GM12878 (cell line): ENCODE measurements at regions of chr16 and their contacts with region 1.

Region 1: GRCh38 chr16:88737298-88738150 is 31.2 kb downstream of the CTU2 start:
- DNase-seq: peak; percentile 13
- ATAC-seq: peak; percentile 98
- H3K4me3 ChIP-seq: no peak overlapping the region
- H3K27ac ChIP-seq: no peak overlapping the region
- H3K4me1 ChIP-seq: peaks cover 3% of the 10 kb centered on the region; the same call in 1 of the 2 replicates
- H3K27me3 ChIP-seq: no peaks in the 10 kb centered on the region
- CTCF ChIP-seq: peak; percentile 93 to 96 (median 95)
- EP300 ChIP-seq: no peak
- POLR2A ChIP-seq: no peak; the same call in 1 of the 2 replicates
- RAD21 ChIP-seq: peak; percentile 62; the same call in 1 of the 2 replicates

Region 2: GRCh38 chr16:88706288-88706964 is 31.1 kb before region 1 on chr16 and contains the starts of genes CTU2 and RNF166:
- CTCF ChIA-PET with region 1: interaction called, 13 read pairs
- POLR2A ChIA-PET with region 1: no interaction called
- RAD21 ChIA-PET with region 1: interaction called, 6 read pairs
- SMC1A ChIA-PET with region 1: interaction called, 5 read pairs
- in situ Hi-C with region 1: no loop called
- intact Hi-C with region 1: no loop called
- DNase-seq: peak; percentile 32
- ATAC-seq: peak; percentile 69
- H3K4me3 ChIP-seq: peak within 1 kb of the TSS; percentile 90
- H3K27ac ChIP-seq: peak within 1 kb of the TSS; percentile 30
- H3K4me1 ChIP-seq: peaks cover 39% of the 10 kb centered on the region
- H3K27me3 ChIP-seq: no peaks in the 10 kb centered on the region
- CTCF ChIP-seq: no peak
- EP300 ChIP-seq: no peak
- POLR2A ChIP-seq: peak; percentile 75; the same call in 1 of the 2 replicates
- RAD21 ChIP-seq: no peak
- polyA plus RNA-seq, gene CTU2: 0.32 to 4.0 TPM
- polyA plus RNA-seq, gene RNF166: 0.48 to 1.3 TPM

Region 3: GRCh38 chr16:88803264-88803987 is 65.9 kb after region 1 on chr16 and contains the start of gene CDT1:
- CTCF ChIA-PET with region 1: interaction called, 15 read pairs
- POLR2A ChIA-PET with region 1: no interaction called
- RAD21 ChIA-PET with region 1: interaction called, 3 read pairs
- SMC1A ChIA-PET with region 1: no interaction called
- in situ Hi-C with region 1: no loop called
- intact Hi-C with region 1: no loop called
- DNase-seq: no peak
- ATAC-seq: peak; percentile 52
- H3K4me3 ChIP-seq: peak within 1 kb of the TSS; percentile 88
- H3K27ac ChIP-seq: peak within 1 kb of the TSS; percentile 87
- H3K4me1 ChIP-seq: peaks cover 18% of the 10 kb centered on the region
- H3K27me3 ChIP-seq: no peaks in the 10 kb centered on the region
- CTCF ChIP-seq: no peak
- EP300 ChIP-seq: no peak
- POLR2A ChIP-seq: peak; percentile 67
- RAD21 ChIP-seq: no peak
- polyA plus RNA-seq, gene CDT1: 0.50 to 1.9 TPM

Region 4: DNA sequence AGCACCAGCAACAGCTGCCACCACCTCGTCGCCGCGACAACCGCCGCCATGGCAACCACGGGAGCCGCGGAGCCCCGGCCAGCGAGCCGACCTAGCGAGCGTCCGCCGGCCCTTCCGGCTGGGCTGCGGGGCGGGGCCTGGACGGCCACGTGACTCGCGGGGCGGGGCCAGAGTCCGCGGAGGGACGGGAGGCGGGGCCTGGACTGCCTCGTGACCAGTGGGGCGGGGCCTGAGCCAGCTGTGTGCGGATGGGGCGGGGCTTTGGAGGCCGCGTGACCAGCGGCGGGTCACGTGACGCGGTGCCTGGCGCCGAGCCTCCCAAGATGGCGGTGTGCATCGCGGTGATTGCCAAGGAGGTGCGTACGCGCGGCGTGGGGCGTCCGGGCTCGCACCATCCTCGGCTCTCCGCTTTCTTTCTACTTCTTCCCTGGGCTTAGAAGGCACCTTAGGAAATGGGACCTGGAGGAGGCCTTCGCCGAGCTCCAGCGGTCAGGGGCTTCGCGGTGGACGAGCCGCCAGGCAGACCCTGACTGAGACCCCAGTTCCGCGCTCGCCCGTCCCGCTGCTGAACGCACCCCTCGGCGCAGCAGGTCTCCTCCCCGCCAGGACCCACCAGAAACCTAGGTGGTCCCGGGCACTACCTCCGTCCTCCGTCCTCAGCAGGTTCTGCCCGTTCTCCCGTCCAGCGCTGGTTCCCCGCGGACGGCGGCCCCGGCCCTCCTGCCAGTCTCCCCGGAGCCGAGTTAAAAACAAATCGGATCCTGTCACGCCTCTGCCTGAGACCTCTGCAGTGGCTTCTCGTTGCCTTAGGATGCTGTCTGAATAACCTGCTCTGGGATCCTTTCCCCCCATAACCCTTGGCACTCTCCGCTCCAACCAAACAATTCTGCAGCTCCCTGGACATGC is 119.6 kb after region 1 on chr16 and contains the starts of genes GALNS and TRAPPC2L:
- CTCF ChIA-PET with region 1: interaction called, 12 read pairs
- POLR2A ChIA-PET with region 1: no interaction called
- RAD21 ChIA-PET with region 1: interaction called, 4 read pairs
- SMC1A ChIA-PET with region 1: interaction called, 3 read pairs
- in situ Hi-C with region 1: no loop called
- intact Hi-C with region 1: loop called (anchors 1 kb)
- DNase-seq: peak; percentile 69
- ATAC-seq: peak; percentile 90
- H3K4me3 ChIP-seq: peak within 1 kb of the TSS; percentile 88
- H3K27ac ChIP-seq: peak within 1 kb of the TSS; percentile 64
- H3K4me1 ChIP-seq: peaks cover 23% of the 10 kb centered on the region
- H3K27me3 ChIP-seq: no peaks in the 10 kb centered on the region
- CTCF ChIP-seq: no peak
- EP300 ChIP-seq: no peak
- POLR2A ChIP-seq: peak; percentile 96
- RAD21 ChIP-seq: no peak
- polyA plus RNA-seq, gene GALNS: 0.37 to 0.95 TPM
- polyA plus RNA-seq, gene TRAPPC2L: 337 to 363 TPM

Region 5: DNA sequence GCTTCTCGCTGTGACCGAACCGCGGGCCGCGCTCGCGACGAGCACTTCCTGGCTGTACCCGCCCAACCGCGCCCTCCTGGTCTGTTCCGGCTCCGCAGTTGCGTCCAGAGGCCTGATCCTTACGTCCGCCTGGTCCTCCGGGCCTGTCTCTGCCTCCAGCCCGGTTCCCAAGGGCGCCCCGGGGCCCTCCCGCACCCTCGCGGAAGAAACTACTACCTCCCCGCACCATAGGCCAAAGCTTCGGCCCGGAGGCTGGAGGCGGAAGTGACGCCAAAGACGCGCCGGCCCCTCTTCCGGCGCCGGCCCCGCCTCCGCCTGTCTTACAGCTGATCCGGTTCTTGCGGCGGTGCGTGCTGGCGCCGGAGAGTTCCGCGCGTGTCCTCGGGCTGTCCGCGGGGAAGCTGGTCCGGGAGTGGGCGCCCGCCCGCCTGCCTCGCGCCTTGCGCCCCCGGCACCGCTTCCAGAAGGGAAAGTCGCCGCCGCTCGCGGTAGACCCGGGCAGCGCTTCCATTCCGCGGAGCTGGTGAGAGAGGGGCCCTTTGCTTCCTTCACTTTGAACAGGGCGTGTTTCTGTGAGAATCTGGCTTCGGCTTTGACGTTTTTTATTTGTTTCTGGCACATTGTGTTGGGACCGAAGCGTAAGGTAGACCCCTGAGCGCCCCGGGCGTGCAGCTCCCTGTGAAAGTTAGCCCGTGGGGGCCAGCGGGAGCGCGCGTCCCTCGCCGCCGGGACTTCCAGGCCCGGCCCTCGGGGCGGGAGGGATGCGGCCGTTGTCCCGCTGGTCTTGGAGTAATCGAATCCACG is 480.1 kb after region 1 on chr16 and contains the start of gene ZNF778:
- CTCF ChIA-PET with region 1: interaction called, 11 read pairs
- POLR2A ChIA-PET with region 1: no interaction called
- RAD21 ChIA-PET with region 1: interaction called, 10 read pairs
- SMC1A ChIA-PET with region 1: interaction called, 5 read pairs
- in situ Hi-C with region 1: no loop called
- intact Hi-C with region 1: loop called (anchors 10 kb)
- DNase-seq: peak; percentile 40
- ATAC-seq: peak; percentile 95
- H3K4me3 ChIP-seq: peak within 1 kb of the TSS; percentile 92
- H3K27ac ChIP-seq: peak within 1 kb of the TSS; percentile 86
- H3K4me1 ChIP-seq: peaks cover 3% of the 10 kb centered on the region
- H3K27me3 ChIP-seq: no peaks in the 10 kb centered on the region
- CTCF ChIP-seq: no peak
- EP300 ChIP-seq: no peak
- POLR2A ChIP-seq: peak; percentile 92
- RAD21 ChIP-seq: no peak
- polyA plus RNA-seq, gene ZNF778: 0.20 to 0.40 TPM

Region 6: DNA sequence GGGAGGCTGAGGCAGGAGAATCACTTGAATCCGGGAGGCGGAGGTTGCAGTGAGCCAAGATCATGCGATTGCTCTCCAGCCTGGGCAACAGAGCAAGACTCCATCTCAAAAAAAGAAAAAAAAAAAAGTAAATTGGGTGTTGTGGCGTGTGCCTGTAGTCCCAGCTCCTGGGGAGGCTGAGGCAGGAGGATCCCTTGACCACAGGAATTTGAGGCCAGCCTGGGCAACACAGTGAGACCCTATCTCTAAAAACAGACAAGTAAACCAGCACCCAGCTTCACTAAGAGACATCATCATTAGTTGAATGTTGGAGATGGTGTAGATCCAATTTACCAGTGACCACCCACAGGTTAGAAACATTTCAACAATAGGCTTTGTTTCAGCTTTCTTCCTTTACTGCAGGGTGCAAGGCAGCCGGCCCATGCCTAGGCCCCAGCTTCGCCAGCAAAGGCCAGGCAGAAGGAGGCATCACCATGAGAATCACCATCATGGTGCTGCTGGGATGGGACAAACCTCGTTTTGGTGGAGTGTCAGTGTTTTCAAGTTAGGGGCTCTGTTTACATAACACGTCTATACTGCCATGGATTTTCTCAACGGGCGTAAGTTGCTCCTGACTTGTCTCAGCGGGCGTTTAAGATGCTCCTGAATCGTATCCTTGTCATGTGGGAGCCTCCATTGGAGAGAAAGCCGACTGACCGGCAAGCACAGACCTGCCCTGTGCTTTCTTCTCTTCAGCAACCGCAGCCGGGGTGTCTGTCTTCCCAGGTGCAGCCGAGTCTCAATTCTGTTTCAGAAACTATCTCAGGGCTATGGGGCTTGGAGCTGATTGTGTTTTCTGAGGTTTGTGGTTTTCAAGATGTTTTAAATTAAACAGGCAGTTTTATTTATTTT is 1143.2 kb after region 1 on chr16:
- CTCF ChIA-PET with region 1: no interaction called
- POLR2A ChIA-PET with region 1: no interaction called
- RAD21 ChIA-PET with region 1: no interaction called
- SMC1A ChIA-PET with region 1: no interaction called
- in situ Hi-C with region 1: no loop called
- intact Hi-C with region 1: no loop called
- DNase-seq: no peak
- ATAC-seq: no peak
- H3K4me3 ChIP-seq: no peak overlapping the region
- H3K27ac ChIP-seq: no peak overlapping the region
- H3K4me1 ChIP-seq: no peaks in the 10 kb centered on the region
- H3K27me3 ChIP-seq: no peaks in the 10 kb centered on the region
- CTCF ChIP-seq: no peak
- EP300 ChIP-seq: no peak
- POLR2A ChIP-seq: no peak
- RAD21 ChIP-seq: no peak